ENCODE measurements at regions of chr12 and their contacts with region 1.

Region 1: GRCh38 chr12:93025145-93025805 is 96.2 kb upstream of the EEA1 start:
- DNase-seq: no peak
- ATAC-seq: peak; percentile 72 to 76
- H3K4me3 ChIP-seq: no peak overlapping the region
- H3K27ac ChIP-seq: no peak overlapping the region
- H3K4me1 ChIP-seq: no peaks in the 10 kb centered on the region
- H3K27me3 ChIP-seq: no peaks in the 10 kb centered on the region
- CTCF ChIP-seq: peak; percentile 18 to 53 (median 46)
- POLR2A ChIP-seq: no peak

Region 2: GRCh38 chr12:92668739-92669138 is 356.5 kb before region 1 on chr12:
- in situ Hi-C with region 1: no loop called
- intact Hi-C with region 1: no loop called
- DNase-seq: no peak
- ATAC-seq: no peak
- H3K4me3 ChIP-seq: no peak overlapping the region
- H3K27ac ChIP-seq: no peak overlapping the region
- H3K4me1 ChIP-seq: no peaks in the 10 kb centered on the region
- H3K27me3 ChIP-seq: no peaks in the 10 kb centered on the region
- CTCF ChIP-seq: no peak
- POLR2A ChIP-seq: no peak

Region 3: DNA sequence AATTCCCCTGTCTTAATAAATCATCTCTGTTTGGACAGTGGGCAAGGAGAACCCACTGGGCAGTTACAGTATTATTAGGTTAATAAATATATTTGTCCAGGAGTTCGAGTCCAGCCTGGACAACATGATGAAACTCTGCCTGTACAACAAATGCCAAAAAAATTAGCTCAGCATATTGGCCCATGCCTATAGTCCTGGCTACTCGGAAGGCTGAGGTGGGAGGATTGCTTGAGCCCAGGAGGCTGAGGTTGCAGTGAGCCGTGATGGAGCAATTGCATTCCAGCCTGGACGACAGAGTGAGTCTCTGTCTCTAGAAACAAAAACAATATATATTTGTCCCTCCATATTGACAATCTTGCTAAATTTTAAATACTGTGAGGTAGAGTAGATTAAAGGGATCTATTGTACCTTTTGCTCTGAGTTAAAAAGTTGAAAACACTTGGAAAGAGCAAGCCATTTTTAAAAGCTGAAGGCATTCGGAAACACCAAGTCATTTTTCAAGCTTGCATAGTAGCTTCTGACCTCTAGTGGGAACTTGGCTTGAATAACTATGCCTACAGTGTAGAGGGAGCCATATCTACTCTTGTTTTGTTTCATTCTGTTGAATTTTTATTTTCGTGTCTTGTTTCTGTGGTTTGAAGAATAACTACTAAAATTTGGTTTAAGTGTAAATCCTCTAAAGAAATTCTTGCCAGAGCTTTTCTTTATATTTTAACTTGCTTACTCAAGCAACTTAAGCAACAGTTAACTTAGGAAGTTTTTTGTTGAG is 81.6 kb before region 1 on chr12:
- in situ Hi-C with region 1: no loop called
- intact Hi-C with region 1: no loop called
- DNase-seq: no peak
- ATAC-seq: no peak
- H3K4me3 ChIP-seq: no peak overlapping the region
- H3K27ac ChIP-seq: no peak overlapping the region
- H3K4me1 ChIP-seq: no peaks in the 10 kb centered on the region
- H3K27me3 ChIP-seq: no peaks in the 10 kb centered on the region
- CTCF ChIP-seq: no peak
- POLR2A ChIP-seq: no peak

Region 4: GRCh38 chr12:93002293-93003054 is 22.8 kb before region 1 on chr12:
- in situ Hi-C with region 1: no loop called
- intact Hi-C with region 1: no loop called
- DNase-seq: no peak
- ATAC-seq: no peak
- H3K4me3 ChIP-seq: no peak overlapping the region
- H3K27ac ChIP-seq: no peak overlapping the region
- H3K4me1 ChIP-seq: no peaks in the 10 kb centered on the region
- H3K27me3 ChIP-seq: no peaks in the 10 kb centered on the region
- CTCF ChIP-seq: no peak
- POLR2A ChIP-seq: no peak

Region 5: GRCh38 chr12:93390549-93391297 is 365.4 kb after region 1 on chr12:
- in situ Hi-C with region 1: loop called in 1 of 4 experiments (anchors 10 kb)
- intact Hi-C with region 1: no loop called
- DNase-seq: no peak
- ATAC-seq: no peak
- H3K4me3 ChIP-seq: no peak overlapping the region
- H3K27ac ChIP-seq: peak overlapping the region in 3 of 4 donors; percentile 35 to 51 (median 43)
- H3K4me1 ChIP-seq: peaks cover 11 to 25% of the 10 kb centered on the region in 2 donors
- H3K27me3 ChIP-seq: no peaks in the 10 kb centered on the region
- CTCF ChIP-seq: no peak
- POLR2A ChIP-seq: no peak

Region 6: GRCh38 chr12:93397412-93397811 is 372.1 kb after region 1 on chr12:
- in situ Hi-C with region 1: loop called in 1 of 4 experiments (anchors 10 kb)
- intact Hi-C with region 1: loop called (anchors 1 kb)
- DNase-seq: no peak
- ATAC-seq: no peak
- H3K4me3 ChIP-seq: no peak overlapping the region
- H3K27ac ChIP-seq: peak overlapping the region; percentile 4 to 54 (median 34)
- H3K4me1 ChIP-seq: peaks cover 6 to 8% of the 10 kb centered on the region in 2 donors
- H3K27me3 ChIP-seq: no peaks in the 10 kb centered on the region
- CTCF ChIP-seq: no peak
- POLR2A ChIP-seq: no peak